IMR-90 (cell line): ENCODE measurements at regions of chr13 and their contacts with region 1.

Region 1: DNA sequence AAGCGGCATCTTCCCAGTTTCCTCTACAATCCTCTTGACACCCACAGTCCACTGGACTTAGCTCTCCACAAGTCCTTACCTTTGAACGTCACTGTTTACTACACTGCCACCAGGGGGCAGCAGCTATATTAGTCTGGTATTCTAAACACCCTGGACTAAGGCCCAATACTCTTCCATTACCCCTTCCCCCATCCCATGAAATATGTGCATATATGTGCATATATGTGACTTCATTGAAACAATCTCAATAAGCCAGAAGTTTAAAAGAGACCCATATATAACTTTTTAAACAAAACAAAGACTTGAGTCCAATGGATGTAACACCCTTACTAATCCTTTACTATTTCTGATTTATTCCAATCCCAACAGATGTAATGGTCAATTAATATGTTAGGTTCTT is 15.5 kb downstream of the GGACT start:
- DNase-seq: peak; percentile 82
- ATAC-seq: peak; percentile 90
- H3K4me3 ChIP-seq: no peak overlapping the region
- H3K27ac ChIP-seq: no peak overlapping the region
- H3K4me1 ChIP-seq: no peaks in the 10 kb centered on the region
- H3K27me3 ChIP-seq: no peaks in the 10 kb centered on the region
- CTCF ChIP-seq: peak; percentile 70
- POLR2A ChIP-seq: no peak
- RAD21 ChIP-seq: peak; percentile 63

Region 2: GRCh38 chr13:100594731-100595130 is 21.6 kb after region 1 on chr13:
- CTCF ChIA-PET with region 1: no interaction called
- POLR2A ChIA-PET with region 1: no interaction called
- dilution Hi-C with region 1: no loop called
- in situ Hi-C with region 1: no loop called
- intact Hi-C with region 1: no loop called
- DNase-seq: no peak
- ATAC-seq: no peak
- H3K4me3 ChIP-seq: no peak overlapping the region
- H3K27ac ChIP-seq: no peak overlapping the region
- H3K4me1 ChIP-seq: no peaks in the 10 kb centered on the region
- H3K27me3 ChIP-seq: peaks cover 6% of the 10 kb centered on the region
- CTCF ChIP-seq: 0 out of 2 replicates have a peak, but pooled peaks have one; percentile 2
- POLR2A ChIP-seq: no peak
- RAD21 ChIP-seq: no peak

Region 3: GRCh38 chr13:100674848-100675660 is 101.9 kb after region 1 on chr13:
- CTCF ChIA-PET with region 1: no interaction called
- POLR2A ChIA-PET with region 1: no interaction called
- dilution Hi-C with region 1: no loop called
- in situ Hi-C with region 1: no loop called
- intact Hi-C with region 1: loop called (anchors 5 kb)
- DNase-seq: peak; percentile 96
- ATAC-seq: peak; percentile 96
- H3K4me3 ChIP-seq: peak overlapping the region; percentile 93
- H3K27ac ChIP-seq: peak overlapping the region; percentile 36; the same call in 1 of the 2 replicates
- H3K4me1 ChIP-seq: peaks cover 8% of the 10 kb centered on the region; the same call in 1 of the 2 replicates
- H3K27me3 ChIP-seq: peaks cover 2% of the 10 kb centered on the region
- CTCF ChIP-seq: peak; percentile 65
- POLR2A ChIP-seq: no peak
- RAD21 ChIP-seq: no peak

Region 4: DNA sequence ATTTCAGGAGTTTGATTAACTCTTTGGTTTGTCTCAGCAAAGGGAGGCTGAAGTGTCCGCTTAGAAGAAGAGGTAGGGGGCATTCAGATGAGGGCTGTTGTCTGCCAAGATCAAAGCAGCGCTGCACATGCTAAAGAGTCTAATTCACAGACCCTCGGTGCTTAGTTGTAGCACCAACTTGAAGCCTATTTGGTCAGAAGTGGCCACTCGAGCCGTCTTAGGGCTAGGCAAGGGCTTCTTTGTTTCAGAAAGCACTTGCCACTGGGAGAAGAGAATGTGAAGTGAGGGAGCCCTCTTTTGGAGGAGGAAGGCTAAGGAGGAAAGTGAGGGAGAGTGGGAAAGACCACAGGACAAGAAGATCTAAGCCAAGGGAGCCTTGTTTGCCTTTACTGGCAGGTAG is 414.8 kb after region 1 on chr13:
- CTCF ChIA-PET with region 1: no interaction called
- POLR2A ChIA-PET with region 1: no interaction called
- dilution Hi-C with region 1: no loop called
- in situ Hi-C with region 1: no loop called
- intact Hi-C with region 1: loop called (anchors 1 kb)
- DNase-seq: peak; percentile 26
- ATAC-seq: peak; percentile 66
- H3K4me3 ChIP-seq: no peak overlapping the region
- H3K27ac ChIP-seq: no peak overlapping the region
- H3K4me1 ChIP-seq: no peaks in the 10 kb centered on the region
- H3K27me3 ChIP-seq: no peaks in the 10 kb centered on the region
- CTCF ChIP-seq: peak; percentile 50
- POLR2A ChIP-seq: no peak
- RAD21 ChIP-seq: peak; percentile 60

Region 5: DNA sequence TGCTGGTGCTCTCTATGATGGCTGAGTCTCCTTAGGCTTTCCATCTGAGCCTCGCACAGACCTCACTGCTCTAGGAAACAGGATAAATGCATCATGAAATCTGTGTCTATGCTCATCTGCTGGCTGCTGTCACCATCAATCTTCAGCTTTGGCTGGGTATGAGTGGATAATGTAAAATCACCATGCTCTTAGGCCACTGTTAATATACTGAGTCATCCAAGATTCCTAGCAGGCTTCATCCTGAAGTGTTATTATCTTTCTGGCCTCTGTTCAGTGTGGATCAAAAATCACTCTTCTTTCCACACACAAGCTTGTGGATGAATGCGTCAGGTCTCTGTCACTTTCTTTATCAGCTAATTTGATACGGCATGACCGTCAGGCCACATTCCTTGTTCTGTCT is 525.8 kb after region 1 on chr13:
- CTCF ChIA-PET with region 1: no interaction called
- POLR2A ChIA-PET with region 1: no interaction called
- dilution Hi-C with region 1: no loop called
- in situ Hi-C with region 1: no loop called
- intact Hi-C with region 1: loop called (anchors 1 kb)
- DNase-seq: peak; percentile 7
- ATAC-seq: peak; percentile 35; the same call in 1 of the 2 replicates
- H3K4me3 ChIP-seq: no peak overlapping the region
- H3K27ac ChIP-seq: no peak overlapping the region
- H3K4me1 ChIP-seq: no peaks in the 10 kb centered on the region
- H3K27me3 ChIP-seq: no peaks in the 10 kb centered on the region
- CTCF ChIP-seq: no peak
- POLR2A ChIP-seq: no peak
- RAD21 ChIP-seq: no peak